Activated CD4-positive, alpha-beta memory T cell treated with anti-CD3 and anti-CD28 coated beads for 36 hours (primary cell): ENCODE measurements at regions of chr1 and their contacts with region 1.

Region 1: GRCh38 chr1:109790735-109791494 is 27.2 kb upstream of the EPS8L3 start:
- DNase-seq: peak; percentile 93
- H3K4me3 Mint-ChIP-seq: no peak overlapping the region
- H3K27ac Mint-ChIP-seq: peak overlapping the region; percentile 87
- H3K4me1 Mint-ChIP-seq: peaks cover 66% of the 10 kb centered on the region
- H3K27me3 Mint-ChIP-seq: no peaks in the 10 kb centered on the region

Region 2: DNA sequence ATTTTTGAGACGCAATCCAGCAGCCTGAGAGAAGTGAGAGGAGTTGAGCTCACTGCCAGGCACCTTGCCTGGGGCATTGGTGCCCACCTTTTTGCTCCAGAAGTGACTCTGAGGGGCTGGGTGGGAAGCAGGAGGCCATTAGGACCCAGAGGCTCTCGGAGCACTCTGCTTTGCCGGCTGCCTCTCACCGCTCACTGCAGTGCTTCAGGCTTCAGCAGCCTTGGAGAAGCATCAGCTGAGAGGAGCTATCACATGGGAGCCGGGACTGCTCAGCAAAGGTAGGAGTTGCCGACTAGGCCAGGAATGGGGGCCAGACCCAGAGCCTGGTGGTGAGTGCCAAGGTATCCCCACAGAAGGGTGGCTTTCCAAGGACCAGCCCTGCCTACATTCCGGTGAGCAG is 251.2 kb before region 1 on chr1 and contains the start of gene GPR61:
- CTCF ChIA-PET with region 1: no interaction called
- POLR2A ChIA-PET with region 1: no interaction called
- intact Hi-C with region 1: no loop called
- DNase-seq: no peak
- H3K4me3 Mint-ChIP-seq: no peak within 1 kb of the TSS
- H3K27ac Mint-ChIP-seq: no peak within 1 kb of the TSS
- H3K4me1 Mint-ChIP-seq: no peaks in the 10 kb centered on the region
- H3K27me3 Mint-ChIP-seq: no peaks in the 10 kb centered on the region
- total RNA-seq, gene GPR61: 0.15 TPM in 1 of 2 experiments, not detected in the other

Region 3: GRCh38 chr1:109773146-109773899 is 17.6 kb before region 1 on chr1:
- CTCF ChIA-PET with region 1: interaction called, 25 read pairs
- POLR2A ChIA-PET with region 1: no interaction called
- intact Hi-C with region 1: loop called (anchors 1 kb)
- DNase-seq: peak; percentile 83
- H3K4me3 Mint-ChIP-seq: no peak overlapping the region
- H3K27ac Mint-ChIP-seq: no peak overlapping the region
- H3K4me1 Mint-ChIP-seq: peaks cover 4% of the 10 kb centered on the region
- H3K27me3 Mint-ChIP-seq: no peaks in the 10 kb centered on the region

Region 4: DNA sequence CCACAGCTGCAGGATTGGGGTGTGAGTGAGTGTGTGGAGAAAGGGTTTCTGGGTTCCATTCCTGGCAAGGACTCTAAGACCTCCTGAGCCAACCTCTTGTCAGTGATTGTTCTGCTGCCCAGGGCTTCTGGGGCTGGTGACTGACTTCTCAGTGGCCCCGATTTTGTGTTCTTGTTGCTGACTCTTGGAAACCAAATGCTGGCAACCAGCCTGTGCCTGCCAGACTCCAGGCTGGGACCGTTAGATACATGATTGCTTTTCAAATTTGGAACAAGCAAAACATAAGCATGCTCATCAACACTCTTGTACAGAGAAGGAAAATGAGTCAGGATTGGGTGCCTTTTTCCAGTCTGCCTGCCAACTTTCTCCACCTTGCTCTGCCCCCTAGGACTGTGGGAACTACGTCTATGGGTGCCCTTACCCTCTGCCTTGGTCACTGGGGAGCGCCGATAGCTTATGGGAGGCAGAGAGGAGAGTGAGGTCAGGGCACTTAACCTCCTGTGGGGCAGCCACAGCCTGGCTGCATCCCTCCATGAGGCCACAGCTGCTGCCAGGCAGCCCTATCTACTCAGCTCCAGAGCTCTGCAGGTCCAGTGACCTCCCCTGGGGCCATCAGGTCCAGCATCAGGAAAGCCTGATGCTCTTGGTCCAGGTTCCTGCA is 12.1 kb after region 1 on chr1:
- CTCF ChIA-PET with region 1: interaction called, 67 read pairs
- POLR2A ChIA-PET with region 1: interaction called, 25 read pairs
- intact Hi-C with region 1: loop called (anchors 1 kb)
- DNase-seq: peak; percentile 45
- H3K4me3 Mint-ChIP-seq: peak overlapping the region; percentile 70
- H3K27ac Mint-ChIP-seq: peak overlapping the region; percentile 99
- H3K4me1 Mint-ChIP-seq: peaks cover 68% of the 10 kb centered on the region
- H3K27me3 Mint-ChIP-seq: no peaks in the 10 kb centered on the region

Region 5: DNA sequence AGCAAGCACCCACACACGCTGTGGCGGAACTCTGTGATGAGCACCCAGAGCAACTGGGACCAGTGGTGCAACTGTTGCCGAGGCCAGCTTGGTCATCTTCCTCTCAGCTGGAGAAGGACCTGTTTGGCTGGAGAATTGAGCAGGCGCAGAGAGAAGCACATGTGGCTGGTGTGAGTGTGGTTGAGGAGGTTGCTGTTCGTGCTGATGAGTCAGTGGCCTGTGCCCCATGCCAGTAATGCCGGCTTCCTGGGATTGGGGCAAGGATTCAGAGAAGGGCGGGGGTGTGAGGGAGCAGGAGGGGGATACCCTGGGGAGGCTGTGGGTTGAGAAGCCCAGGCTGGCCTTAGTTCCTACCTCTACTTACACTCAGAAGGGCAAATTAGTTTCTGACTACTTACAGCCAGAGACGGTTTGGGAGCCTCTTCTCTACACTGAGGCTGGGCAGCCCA is 30.3 kb after region 1 on chr1:
- CTCF ChIA-PET with region 1: interaction called, 5 read pairs
- POLR2A ChIA-PET with region 1: no interaction called
- intact Hi-C with region 1: loop called (anchors 1 kb)
- DNase-seq: peak; percentile 74
- H3K4me3 Mint-ChIP-seq: no peak overlapping the region
- H3K27ac Mint-ChIP-seq: no peak overlapping the region
- H3K4me1 Mint-ChIP-seq: peaks cover 40% of the 10 kb centered on the region
- H3K27me3 Mint-ChIP-seq: no peaks in the 10 kb centered on the region

Region 6: DNA sequence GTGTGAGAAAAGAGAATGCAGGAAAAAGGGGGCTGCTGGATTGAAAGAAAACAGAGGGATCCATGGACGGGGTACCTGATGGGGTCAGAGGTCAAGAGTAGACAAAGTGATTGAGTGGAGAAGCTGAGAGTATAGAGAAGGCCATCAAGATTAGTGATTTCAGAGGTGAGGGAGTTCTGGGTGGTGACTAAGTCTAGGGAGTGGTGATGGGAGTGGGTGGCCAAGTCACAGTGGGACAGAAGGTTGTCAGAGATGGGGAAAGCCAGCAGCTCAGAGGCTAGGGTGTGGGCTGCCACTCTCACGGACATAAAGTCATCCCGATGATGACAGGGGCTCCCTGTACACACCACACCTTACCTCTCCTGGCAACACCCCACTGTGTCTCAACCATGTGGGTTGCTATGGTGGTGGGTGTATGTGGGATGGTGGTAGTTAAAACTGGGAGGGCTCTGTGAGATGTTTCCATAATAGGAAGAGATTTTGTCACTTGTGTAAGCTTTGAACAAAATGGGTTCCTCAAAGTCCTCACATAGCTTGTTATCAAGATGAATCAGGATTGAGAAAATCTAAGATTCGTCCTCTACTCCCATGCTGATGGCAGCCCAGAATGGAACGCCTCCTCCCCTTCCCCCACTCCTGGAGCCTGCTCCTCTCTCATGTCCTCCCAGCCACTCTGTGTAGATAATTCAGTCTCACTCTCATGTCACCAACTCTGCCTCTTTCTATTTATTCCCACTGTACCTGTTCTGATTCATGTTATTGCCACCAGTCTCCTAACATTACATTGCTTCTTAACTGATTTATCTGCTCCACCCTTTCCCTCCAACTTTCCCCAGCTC is 99.4 kb after region 1 on chr1:
- CTCF ChIA-PET with region 1: interaction called, 6 read pairs
- POLR2A ChIA-PET with region 1: interaction called, 3 read pairs
- intact Hi-C with region 1: loop called (anchors 1 kb)
- DNase-seq: peak; percentile 87
- H3K4me3 Mint-ChIP-seq: peak overlapping the region; percentile 1
- H3K27ac Mint-ChIP-seq: peak overlapping the region; percentile 85
- H3K4me1 Mint-ChIP-seq: peaks cover 35% of the 10 kb centered on the region
- H3K27me3 Mint-ChIP-seq: no peaks in the 10 kb centered on the region

Region 7: GRCh38 chr1:109917768-109918606 is 127.1 kb after region 1 on chr1:
- CTCF ChIA-PET with region 1: interaction called, 12 read pairs
- POLR2A ChIA-PET with region 1: no interaction called
- intact Hi-C with region 1: no loop called
- DNase-seq: no peak
- H3K4me3 Mint-ChIP-seq: no peak overlapping the region
- H3K27ac Mint-ChIP-seq: no peak overlapping the region
- H3K4me1 Mint-ChIP-seq: peaks cover 15% of the 10 kb centered on the region
- H3K27me3 Mint-ChIP-seq: no peaks in the 10 kb centered on the region